GM12878 (cell line): ENCODE measurements at regions of chr14 and their contacts with region 1.

Region 1: DNA sequence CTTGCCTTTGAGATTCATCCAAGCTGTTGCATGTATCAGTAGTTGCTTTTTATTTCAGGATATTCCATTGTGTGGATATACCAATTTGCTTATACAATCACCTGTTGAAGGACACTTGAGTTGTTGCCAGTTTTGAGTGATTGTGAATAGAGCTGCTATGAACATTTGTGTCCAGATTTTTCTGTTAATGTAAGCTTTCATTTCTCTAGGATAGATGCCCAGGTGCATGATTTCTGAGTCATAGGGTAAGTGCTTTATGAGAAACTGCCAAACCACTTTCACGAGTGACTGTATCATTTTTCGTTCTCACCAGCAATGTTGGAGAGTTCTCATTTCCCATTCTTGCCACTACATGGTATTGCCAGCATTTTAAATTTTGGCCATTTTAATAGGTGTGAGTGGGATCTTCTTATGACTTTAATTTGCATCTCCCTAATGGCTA is 434.6 kb upstream of the RGS6 start:
- DNase-seq: peak; percentile 98
- ATAC-seq: peak; percentile 91
- H3K4me3 ChIP-seq: no peak overlapping the region
- H3K27ac ChIP-seq: peak overlapping the region; percentile 94
- H3K4me1 ChIP-seq: peaks cover 43% of the 10 kb centered on the region
- H3K27me3 ChIP-seq: no peaks in the 10 kb centered on the region
- CTCF ChIP-seq: no peak
- EP300 ChIP-seq: peak; percentile 99
- POLR2A ChIP-seq: no peak
- RAD21 ChIP-seq: no peak; the same call in none of the 2 replicates

Region 2: GRCh38 chr14:71444030-71444822 is 53.4 kb before region 1 on chr14:
- CTCF ChIA-PET with region 1: interaction called, 3 read pairs
- POLR2A ChIA-PET with region 1: interaction called, 6 read pairs
- RAD21 ChIA-PET with region 1: interaction called, 17 read pairs
- SMC1A ChIA-PET with region 1: interaction called, 14 read pairs
- in situ Hi-C with region 1: no loop called
- intact Hi-C with region 1: no loop called
- DNase-seq: peak; percentile 40
- ATAC-seq: peak; percentile 69
- H3K4me3 ChIP-seq: no peak overlapping the region
- H3K27ac ChIP-seq: no peak overlapping the region
- H3K4me1 ChIP-seq: peaks cover under 1% of the 10 kb centered on the region; the same call in 1 of the 2 replicates
- H3K27me3 ChIP-seq: no peaks in the 10 kb centered on the region
- CTCF ChIP-seq: no peak
- EP300 ChIP-seq: peak; percentile 38 to 47; a peak in 2 of 4 replicates
- POLR2A ChIP-seq: no peak
- RAD21 ChIP-seq: no peak

Region 3: DNA sequence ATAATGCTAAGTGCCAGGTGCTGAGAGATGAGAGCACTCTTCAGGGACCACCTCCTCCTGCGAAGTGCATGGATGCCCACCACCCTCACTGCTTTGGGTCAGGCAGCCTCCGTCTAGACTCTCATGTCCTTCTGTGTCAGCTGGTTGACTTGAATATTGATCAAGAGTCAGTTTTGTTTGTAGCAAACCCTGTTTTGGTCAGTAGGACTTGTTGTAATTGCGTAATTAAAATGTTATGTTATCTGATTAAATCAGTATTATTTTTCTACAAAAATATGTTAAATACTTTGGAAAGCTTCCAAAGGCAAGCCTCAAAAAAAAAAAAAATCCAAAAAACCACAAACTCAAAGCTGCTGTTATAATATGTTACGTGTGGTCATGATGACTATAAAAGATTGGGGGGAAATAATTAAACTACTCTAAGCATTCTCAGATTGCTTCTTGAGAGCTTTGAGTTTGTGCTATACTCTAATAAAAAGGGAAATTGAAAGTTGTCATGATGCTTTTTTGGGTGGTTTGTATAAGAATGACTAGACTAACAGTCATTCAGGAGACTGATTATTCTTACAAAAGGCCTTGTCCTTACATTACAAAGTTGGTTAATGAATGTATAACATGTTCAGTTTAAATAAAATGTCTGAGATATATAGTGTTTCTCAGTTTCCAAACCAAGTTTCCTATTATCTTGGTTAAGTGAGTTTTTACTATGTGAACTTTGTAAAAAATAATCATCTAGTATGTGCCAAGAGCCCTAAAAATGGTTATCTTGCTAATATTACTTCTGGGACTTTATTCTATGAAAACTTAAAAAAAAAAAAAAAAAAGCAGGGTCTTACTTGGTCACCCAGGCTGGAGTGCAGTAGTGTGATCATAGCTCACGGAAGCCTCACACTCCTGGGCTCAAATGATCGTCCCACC is 25.4 kb before region 1 on chr14:
- CTCF ChIA-PET with region 1: interaction called, 12 read pairs
- POLR2A ChIA-PET with region 1: interaction called, 25 read pairs
- RAD21 ChIA-PET with region 1: interaction called, 44 read pairs
- SMC1A ChIA-PET with region 1: interaction called, 74 read pairs
- in situ Hi-C with region 1: no loop called
- intact Hi-C with region 1: loop called (anchors 1 kb)
- DNase-seq: no peak
- ATAC-seq: peak; percentile 84
- H3K4me3 ChIP-seq: no peak overlapping the region
- H3K27ac ChIP-seq: peak overlapping the region; percentile 69
- H3K4me1 ChIP-seq: peaks cover 35% of the 10 kb centered on the region
- H3K27me3 ChIP-seq: no peaks in the 10 kb centered on the region
- CTCF ChIP-seq: no peak
- EP300 ChIP-seq: 0 out of 4 replicates have a peak, but pooled peaks of 1 of the 2 experiments have one; percentile 1
- POLR2A ChIP-seq: no peak
- RAD21 ChIP-seq: no peak

Region 4: GRCh38 chr14:71523630-71524319 is 26.1 kb after region 1 on chr14:
- CTCF ChIA-PET with region 1: interaction called, 3 read pairs
- POLR2A ChIA-PET with region 1: interaction called, 10 read pairs
- RAD21 ChIA-PET with region 1: interaction called, 15 read pairs
- SMC1A ChIA-PET with region 1: interaction called, 35 read pairs
- in situ Hi-C with region 1: no loop called
- intact Hi-C with region 1: loop called (anchors 2 kb)
- DNase-seq: peak; percentile 76
- ATAC-seq: peak; percentile 91
- H3K4me3 ChIP-seq: peak overlapping the region; percentile 22; the same call in 1 of the 2 replicates
- H3K27ac ChIP-seq: peak overlapping the region; percentile 72
- H3K4me1 ChIP-seq: peaks cover 26% of the 10 kb centered on the region
- H3K27me3 ChIP-seq: no peaks in the 10 kb centered on the region
- CTCF ChIP-seq: no peak
- EP300 ChIP-seq: peak; percentile 82 to 95
- POLR2A ChIP-seq: no peak
- RAD21 ChIP-seq: no peak